PC-3 (cell line): ENCODE measurements at regions of chr2 and their contacts with region 1.

Region 1: DNA sequence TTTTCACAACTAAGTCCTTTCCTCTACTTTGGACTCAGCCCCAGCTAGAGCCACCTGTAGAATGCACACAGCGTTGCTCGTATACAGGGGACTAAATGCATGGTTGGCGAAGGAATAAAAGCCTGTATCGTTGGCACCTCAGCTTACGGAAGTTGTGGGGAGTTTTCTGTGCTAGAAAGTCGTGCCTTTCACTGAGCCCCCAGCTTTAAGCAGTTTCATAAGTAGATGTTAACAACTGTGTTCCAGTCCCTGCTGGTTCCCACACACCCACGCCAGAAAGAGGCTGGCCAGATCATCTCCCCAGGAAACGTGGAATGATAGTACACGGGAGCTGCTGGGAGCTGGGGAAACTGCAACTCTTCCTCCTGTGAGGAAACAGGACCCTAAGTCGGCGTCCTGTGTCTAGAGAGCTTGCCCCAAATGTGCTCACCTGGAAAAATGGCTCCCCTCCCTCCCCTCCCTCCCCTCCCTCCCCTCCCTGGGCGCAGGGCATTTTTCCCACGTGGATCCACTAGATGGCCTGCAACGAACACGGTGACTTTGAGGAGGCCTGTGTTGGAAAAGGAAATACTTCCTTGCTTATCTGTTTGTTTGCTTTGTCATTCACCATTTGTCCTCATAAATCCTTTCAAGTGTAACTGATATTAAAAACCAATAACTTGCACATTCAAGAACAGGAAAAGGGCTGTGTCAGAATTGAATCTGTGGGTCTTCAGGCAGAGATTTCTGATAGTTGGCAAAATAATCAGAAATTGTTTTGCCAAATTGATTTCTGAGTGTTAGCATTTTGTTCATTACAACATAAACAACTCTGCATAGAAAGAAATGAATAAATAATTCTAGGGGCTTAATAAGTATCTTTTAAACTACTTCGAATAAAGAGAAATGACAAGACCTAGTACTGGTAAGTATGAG is 43.9 kb upstream of the RFX8 start:
- DNase-seq: peak; percentile 94
- ATAC-seq: peak; percentile 43
- H3K4me3 ChIP-seq: peak overlapping the region; percentile 46
- H3K27ac ChIP-seq: peak overlapping the region; percentile 100
- H3K4me1 ChIP-seq: peaks cover 53% of the 10 kb centered on the region
- H3K27me3 ChIP-seq: no peaks in the 10 kb centered on the region
- CTCF ChIP-seq: peak; percentile 67

Region 2: GRCh38 chr2:101387151-101387807 is 131.6 kb before region 1 on chr2 and contains the start of gene CREG2:
- CTCF ChIA-PET with region 1: no interaction called
- POLR2A ChIA-PET with region 1: no interaction called
- intact Hi-C with region 1: loop called (anchors 2 kb)
- DNase-seq: peak; percentile 78
- ATAC-seq: peak; percentile 64
- H3K4me3 ChIP-seq: peak within 1 kb of the TSS; percentile 90
- H3K27ac ChIP-seq: peak within 1 kb of the TSS; percentile 98
- H3K4me1 ChIP-seq: peaks cover 40% of the 10 kb centered on the region
- H3K27me3 ChIP-seq: no peaks in the 10 kb centered on the region
- CTCF ChIP-seq: peak; percentile 62
- total RNA-seq, gene CREG2: 40.0 and 67.9 TPM in 2 replicates

Region 3: GRCh38 chr2:101463891-101464641 is 54.8 kb before region 1 on chr2:
- CTCF ChIA-PET with region 1: no interaction called
- POLR2A ChIA-PET with region 1: no interaction called
- intact Hi-C with region 1: loop called (anchors 5 kb)
- DNase-seq: peak; percentile 59
- ATAC-seq: peak; percentile 71
- H3K4me3 ChIP-seq: no peak overlapping the region
- H3K27ac ChIP-seq: peak overlapping the region; percentile 89
- H3K4me1 ChIP-seq: peaks cover 21% of the 10 kb centered on the region
- H3K27me3 ChIP-seq: no peaks in the 10 kb centered on the region
- CTCF ChIP-seq: no peak

Region 4: DNA sequence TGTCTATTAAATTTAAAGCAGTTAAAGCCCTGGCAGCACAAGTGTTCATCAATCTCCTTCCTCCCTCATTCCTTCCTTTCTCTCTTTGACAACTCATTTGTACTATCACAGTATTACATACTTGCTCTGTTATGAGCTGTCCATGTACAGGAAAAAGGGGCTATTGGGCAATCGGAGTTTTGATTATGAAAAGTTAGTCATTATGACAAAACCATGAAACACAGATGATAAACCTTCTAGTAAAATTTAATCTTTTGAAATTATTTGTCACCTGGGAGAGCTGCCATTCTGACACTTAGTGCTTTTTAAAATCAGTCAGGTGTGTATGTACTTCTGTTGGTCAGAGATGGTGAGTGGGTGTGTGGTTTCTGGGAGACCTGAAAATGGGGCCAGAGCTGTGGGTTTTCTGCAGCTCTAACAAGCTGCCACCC is 218.0 kb after region 1 on chr2:
- CTCF ChIA-PET with region 1: no interaction called
- POLR2A ChIA-PET with region 1: no interaction called
- intact Hi-C with region 1: loop called (anchors 1 kb)
- DNase-seq: peak; percentile 91
- ATAC-seq: peak; percentile 79
- H3K4me3 ChIP-seq: no peak overlapping the region
- H3K27ac ChIP-seq: peak overlapping the region; percentile 85
- H3K4me1 ChIP-seq: peaks cover 68% of the 10 kb centered on the region
- H3K27me3 ChIP-seq: no peaks in the 10 kb centered on the region
- CTCF ChIP-seq: no peak

Region 5: GRCh38 chr2:101831351-101831865 is 312.6 kb after region 1 on chr2:
- CTCF ChIA-PET with region 1: interaction called, 5 read pairs
- POLR2A ChIA-PET with region 1: no interaction called
- intact Hi-C with region 1: loop called (anchors 2 kb)
- DNase-seq: peak; percentile 79
- ATAC-seq: peak; percentile 77
- H3K4me3 ChIP-seq: no peak overlapping the region
- H3K27ac ChIP-seq: peak overlapping the region; percentile 33
- H3K4me1 ChIP-seq: peaks cover 38% of the 10 kb centered on the region
- H3K27me3 ChIP-seq: no peaks in the 10 kb centered on the region
- CTCF ChIP-seq: peak; percentile 84